Heart right ventricle (tissue), 16 donors: ENCODE measurements at regions of chr3 and their contacts with region 1.

Region 1: DNA sequence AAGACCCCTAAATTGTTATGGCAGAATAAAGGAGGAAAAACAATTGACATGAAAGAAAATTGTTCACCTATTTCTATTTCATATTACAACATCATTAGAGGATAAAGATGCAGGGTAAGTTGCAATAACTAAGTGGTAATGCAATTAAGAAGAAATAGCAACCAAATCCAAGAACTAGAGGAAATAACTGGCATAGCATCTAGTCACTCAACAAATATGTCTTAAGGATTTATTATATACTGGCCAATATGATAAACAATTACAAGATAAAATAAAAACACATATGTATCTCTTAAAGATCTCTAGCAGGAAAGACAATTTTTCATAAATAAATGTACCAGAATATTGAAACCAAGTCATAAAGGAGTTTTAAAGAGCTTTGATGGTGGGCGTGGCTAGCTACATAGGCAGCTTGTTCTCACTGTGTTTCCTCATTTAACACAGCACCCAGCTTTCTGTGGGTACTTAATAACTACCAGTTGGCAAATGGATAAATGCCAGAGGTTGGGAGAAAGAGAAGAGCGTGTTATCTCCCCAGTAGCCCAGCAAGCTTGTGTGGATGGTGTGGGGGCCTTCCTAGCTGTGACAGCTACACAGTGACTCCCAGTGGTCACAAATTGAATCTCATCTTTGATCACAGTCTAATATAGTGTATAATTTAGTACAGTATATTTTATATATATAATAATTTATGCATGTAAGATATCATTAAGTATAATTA is 983.9 kb downstream of the EPHA3 start:
- DNase-seq: peak in 1 of 2 donors; percentile 17
- ATAC-seq: peak in 6 of 8 donors; percentile 64 to 78 (median 74)
- H3K4me3 ChIP-seq: no peak overlapping the region
- H3K27ac ChIP-seq: no peak overlapping the region
- H3K4me1 ChIP-seq: peaks cover 0 to 4% (median 0%) of the 10 kb centered on the region in 9 donors
- H3K27me3 ChIP-seq: no peaks in the 10 kb centered on the region
- CTCF ChIP-seq: peak; percentile 21 to 71 (median 52)

Region 2: GRCh38 chr3:88209356-88209755 is 1882.0 kb before region 1 on chr3:
- intact Hi-C with region 1: loop called in 6 of 10 experiments (anchors 5 to 10 kb)
- DNase-seq: no peak
- ATAC-seq: no peak
- H3K4me3 ChIP-seq: no peak overlapping the region
- H3K27ac ChIP-seq: no peak overlapping the region
- H3K4me1 ChIP-seq: no peaks in the 10 kb centered on the region
- H3K27me3 ChIP-seq: no peaks in the 10 kb centered on the region
- CTCF ChIP-seq: no peak

Region 3: DNA sequence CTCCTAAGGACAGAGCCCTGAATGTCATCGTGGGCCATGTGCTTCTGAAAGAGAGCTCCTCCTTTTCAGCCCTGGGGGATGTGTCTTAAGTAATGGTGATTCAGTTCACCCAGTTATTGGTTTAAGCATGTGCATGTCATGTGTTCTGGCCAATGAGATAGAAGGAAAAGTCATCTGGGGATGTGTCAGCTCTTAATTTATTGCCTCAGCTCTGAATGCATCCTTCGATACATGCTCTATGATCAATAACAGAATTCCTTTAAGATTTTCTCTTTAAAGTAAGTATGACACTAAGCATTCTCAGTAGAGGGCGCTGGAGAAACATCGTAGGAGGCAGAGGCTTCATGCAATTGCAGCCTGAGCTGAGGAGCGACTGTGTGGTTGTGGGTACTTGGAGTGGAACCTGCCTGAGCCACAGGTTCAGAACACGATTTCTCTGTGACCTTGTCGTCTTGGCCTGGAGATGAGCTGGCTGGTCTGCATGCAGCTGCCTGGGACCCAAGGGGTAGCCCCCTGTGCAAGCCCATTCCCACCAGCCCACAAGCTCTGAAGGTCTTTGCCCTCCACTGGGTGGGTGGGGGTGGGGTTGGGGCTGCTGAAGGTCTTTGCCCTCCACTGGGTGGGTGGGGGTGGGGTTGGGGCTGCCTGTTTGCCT is 1872.1 kb before region 1 on chr3:
- intact Hi-C with region 1: loop called in 1 of 10 experiments (anchors 5 kb)
- DNase-seq: peak in 1 of 2 donors; percentile 34
- ATAC-seq: peak in 4 of 8 donors; percentile 25 to 72 (median 47)
- H3K4me3 ChIP-seq: no peak overlapping the region
- H3K27ac ChIP-seq: no peak overlapping the region
- H3K4me1 ChIP-seq: no peaks in the 10 kb centered on the region
- H3K27me3 ChIP-seq: no peaks in the 10 kb centered on the region
- CTCF ChIP-seq: peak in 7 of 9 donors; percentile 41 to 70 (median 53)

Region 4: GRCh38 chr3:89682556-89682955 is 408.8 kb before region 1 on chr3:
- intact Hi-C with region 1: no loop called
- DNase-seq: no peak
- ATAC-seq: no peak
- H3K4me3 ChIP-seq: no peak overlapping the region
- H3K27ac ChIP-seq: no peak overlapping the region
- H3K4me1 ChIP-seq: no peaks in the 10 kb centered on the region
- H3K27me3 ChIP-seq: no peaks in the 10 kb centered on the region
- CTCF ChIP-seq: no peak

Region 5: DNA sequence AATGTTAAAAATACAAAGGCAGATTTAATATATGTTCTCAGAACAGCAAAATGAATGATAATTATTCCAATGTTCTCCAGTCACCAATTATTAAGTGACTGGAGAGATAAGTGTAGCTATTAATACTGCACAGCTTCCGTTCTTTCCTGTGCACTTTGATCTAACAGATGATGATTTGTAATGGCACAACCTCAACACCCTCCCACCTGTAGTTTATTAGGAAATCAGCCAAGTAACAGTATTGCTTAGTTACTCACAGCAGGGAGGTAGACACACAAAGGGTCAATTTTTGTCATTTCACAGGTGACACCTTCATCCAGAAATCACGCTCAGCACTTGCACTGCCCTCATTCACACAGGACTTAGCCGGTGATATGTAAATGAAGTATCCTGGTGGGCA is 295.9 kb before region 1 on chr3:
- intact Hi-C with region 1: no loop called
- DNase-seq: no peak
- ATAC-seq: no peak
- H3K4me3 ChIP-seq: no peak overlapping the region
- H3K27ac ChIP-seq: no peak overlapping the region
- H3K4me1 ChIP-seq: no peaks in the 10 kb centered on the region
- H3K27me3 ChIP-seq: no peaks in the 10 kb centered on the region
- CTCF ChIP-seq: no peak

Region 6: DNA sequence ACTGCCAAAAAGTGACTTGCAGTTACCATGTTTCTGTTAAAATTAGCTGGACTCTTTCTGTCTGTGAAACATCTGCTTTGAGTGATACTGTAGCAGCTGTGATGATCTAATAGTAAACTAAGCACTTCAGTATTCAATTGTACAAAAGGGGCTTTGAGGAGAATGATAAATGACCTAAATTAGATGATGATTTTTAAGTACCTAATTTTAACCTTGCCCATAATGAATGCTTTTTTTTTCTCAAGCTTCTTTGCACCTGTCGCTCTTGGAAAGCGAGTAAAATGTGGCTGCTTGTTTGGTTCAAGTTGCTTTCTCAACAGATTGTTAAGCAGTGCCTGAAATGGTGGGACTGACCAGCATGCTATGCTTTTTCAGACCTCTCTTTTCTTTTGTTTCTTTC is 231.6 kb before region 1 on chr3:
- intact Hi-C with region 1: loop called in 1 of 10 experiments (anchors 10 kb)
- DNase-seq: no peak
- ATAC-seq: peak in 5 of 8 donors; percentile 20 to 76 (median 52)
- H3K4me3 ChIP-seq: no peak overlapping the region
- H3K27ac ChIP-seq: no peak overlapping the region
- H3K4me1 ChIP-seq: peaks cover 0 to 4% (median 0%) of the 10 kb centered on the region in 9 donors
- H3K27me3 ChIP-seq: no peaks in the 10 kb centered on the region
- CTCF ChIP-seq: no peak